ENCODE measurements at regions of chr17 and their contacts with region 1.

Region 1: DNA sequence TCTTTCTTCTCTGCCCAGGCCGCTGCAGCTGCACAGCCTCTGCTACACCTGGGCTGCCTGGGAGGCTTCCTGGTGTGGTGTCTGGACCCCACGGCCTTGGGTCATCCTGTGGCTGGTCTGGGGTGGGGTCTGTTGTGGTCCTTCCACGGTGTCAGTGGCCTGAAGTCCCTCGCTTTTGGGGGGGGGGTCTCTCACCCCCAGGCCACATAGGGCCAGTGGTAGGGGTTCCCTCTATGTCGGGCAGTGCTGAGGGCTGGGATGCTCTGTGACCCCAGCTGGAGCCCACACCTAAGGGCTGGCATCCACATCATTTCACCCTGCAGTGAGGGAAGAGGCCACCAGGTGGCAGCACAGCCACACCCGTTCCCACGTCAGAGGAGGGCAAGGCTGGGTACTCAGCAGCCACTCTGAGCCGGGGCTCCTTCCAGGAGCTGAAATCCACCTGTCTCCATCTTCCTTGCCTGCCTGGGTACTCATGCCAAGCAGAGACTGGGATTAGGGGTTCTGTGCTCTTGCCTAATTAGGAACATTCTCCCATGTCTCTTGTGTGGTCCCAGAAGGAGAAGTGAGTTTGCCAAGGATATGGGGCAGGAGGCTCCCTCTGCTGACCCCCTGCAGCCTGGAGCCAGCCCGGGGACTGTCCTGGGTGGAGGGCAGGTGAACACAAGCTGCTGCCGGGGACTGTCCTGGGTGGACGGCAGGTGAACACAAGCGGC is 13.0 kb downstream of the ENGASE start:
- DNase-seq: peak; percentile 62 to 80
- H3K4me3 ChIP-seq: no peak overlapping the region
- H3K27ac ChIP-seq: no peak overlapping the region
- H3K4me1 ChIP-seq: peaks cover 0 to 9% (median 7%) of the 10 kb centered on the region in 4 donors
- H3K27me3 ChIP-seq: peaks cover 0 to 31% of the 10 kb centered on the region in 2 donors
- CTCF ChIP-seq: peak; percentile 89 to 91

Region 2: DNA sequence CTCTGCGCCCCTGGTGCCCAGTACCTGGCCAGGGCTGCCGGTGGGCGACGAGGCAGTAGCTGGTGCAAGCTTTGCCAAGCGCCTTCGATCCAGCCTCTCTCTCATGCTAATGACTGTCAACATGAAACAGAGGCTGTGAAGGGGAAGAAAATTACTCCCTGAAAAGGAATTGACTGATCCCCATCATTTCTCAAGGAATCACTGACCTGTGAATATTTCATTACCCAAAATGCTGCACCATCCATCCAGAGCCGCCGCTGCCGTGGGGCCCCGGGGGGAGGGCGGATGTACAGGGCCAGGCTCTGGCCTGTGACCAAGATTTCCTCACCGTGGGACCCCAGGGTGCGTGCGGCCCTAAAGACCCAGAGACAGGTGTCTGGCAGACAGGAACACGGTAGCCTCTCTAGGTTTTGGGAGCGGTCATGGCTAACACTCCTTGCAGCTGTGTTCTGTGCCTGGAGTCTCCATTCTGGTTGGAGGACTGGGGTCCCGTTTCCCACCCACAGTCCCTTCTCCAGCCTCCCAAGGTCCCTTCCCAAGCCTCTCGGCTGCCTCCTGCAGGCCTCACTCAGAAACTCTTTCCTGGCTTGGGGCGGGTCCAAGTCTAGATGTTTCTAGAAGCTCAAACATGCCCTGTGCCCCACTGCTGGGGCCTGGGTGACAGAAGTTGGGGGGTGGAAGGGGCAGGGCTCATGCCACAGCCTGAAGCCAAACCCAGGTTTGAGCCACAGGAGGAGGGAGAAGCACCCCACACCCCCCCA is 60.3 kb after region 1 on chr17:
- intact Hi-C with region 1: no loop called
- DNase-seq: no peak
- H3K4me3 ChIP-seq: no peak overlapping the region
- H3K27ac ChIP-seq: no peak overlapping the region
- H3K4me1 ChIP-seq: no peaks in the 10 kb centered on the region
- H3K27me3 ChIP-seq: peaks cover 0 to 91% of the 10 kb centered on the region in 2 donors
- CTCF ChIP-seq: no peak

Region 3: DNA sequence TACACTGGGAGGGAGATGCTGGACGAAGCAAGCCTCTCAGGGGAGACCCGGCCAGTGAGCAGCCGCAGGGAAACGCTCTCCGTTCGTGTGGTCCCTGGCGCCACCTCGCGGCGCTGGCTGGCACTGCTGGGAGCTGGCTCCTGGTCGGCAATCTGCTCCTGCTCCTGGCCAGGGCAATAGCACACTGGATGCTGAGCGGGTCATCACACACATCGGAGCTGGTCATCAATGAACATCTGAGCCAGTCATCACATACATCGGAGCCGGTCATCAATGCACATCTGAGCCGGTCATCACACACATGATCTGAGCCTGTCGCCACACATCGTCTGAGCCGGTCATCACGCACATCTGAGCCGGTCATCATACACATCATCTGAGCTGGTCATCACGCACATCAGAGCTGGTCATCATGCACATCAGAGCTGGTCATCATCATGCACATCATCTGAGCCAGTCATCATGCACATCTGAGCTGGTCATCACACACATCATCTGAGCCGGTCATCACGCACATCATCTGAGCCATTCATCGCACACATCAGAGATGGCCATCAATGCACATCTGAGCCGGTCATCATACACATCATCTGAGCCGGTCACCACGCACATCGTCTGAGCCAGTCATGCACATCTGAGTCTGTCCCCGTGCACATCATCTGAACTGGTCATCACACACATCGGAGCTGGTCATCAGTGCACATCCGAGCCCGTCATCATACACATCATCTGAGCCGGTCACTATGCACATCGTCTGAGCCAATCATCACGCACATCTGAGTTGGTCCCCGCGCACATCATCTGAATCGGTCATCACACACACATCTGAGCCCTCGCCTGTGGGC is 306.0 kb after region 1 on chr17:
- intact Hi-C with region 1: loop called (anchors 2 kb)
- DNase-seq: peak; percentile 80 to 86
- H3K4me3 ChIP-seq: no peak overlapping the region
- H3K27ac ChIP-seq: no peak overlapping the region
- H3K4me1 ChIP-seq: peaks cover 0 to 11% (median 2%) of the 10 kb centered on the region in 4 donors
- H3K27me3 ChIP-seq: peaks cover 0 to 95% of the 10 kb centered on the region in 2 donors
- CTCF ChIP-seq: peak; percentile 91 to 98

Region 4: DNA sequence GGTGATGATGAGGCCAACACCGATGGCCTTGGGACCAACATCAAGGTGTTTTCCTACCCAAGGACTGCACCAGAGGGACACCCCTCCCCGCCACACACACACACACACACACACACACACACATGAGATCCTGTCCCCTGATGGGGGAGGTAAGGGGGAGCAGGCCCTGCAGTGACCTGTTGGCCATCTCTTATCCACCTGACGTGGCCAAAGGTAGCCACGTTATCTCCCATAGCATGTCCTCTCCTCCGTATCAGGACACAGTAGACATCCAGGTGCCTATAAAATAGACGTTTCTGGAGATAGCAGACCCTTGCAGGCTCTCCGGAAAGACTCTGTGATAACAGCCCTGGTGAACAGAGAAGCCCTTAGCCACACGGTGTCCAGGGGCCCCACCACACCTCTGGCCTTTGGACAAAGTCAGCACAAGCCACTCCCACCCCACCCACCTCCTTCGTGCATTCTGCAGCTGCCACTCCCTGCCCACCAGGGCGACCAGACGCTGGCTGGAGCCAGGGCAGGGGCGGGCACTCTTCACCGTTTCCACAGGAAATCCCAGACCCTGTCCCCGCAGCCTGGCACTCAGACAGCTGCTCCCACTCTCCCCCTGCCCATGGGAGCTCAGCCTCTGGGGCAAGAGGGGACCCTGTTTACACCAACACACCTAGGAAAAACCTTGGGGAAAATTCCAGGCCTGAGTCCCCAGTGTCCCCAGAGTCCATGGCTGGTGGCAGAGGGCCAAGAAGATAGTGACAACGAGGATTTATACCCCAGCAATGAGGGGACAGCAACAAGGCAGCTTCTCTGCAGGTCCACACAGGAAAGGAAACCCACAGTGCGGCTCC is 627.7 kb after region 1 on chr17:
- intact Hi-C with region 1: loop called (anchors 10 kb)
- DNase-seq: no peak
- H3K4me3 ChIP-seq: no peak overlapping the region
- H3K27ac ChIP-seq: no peak overlapping the region
- H3K4me1 ChIP-seq: no peaks in the 10 kb centered on the region
- H3K27me3 ChIP-seq: peaks cover 0 to 53% of the 10 kb centered on the region in 2 donors
- CTCF ChIP-seq: no peak